ENCODE measurements at regions of chr12 and their contacts with region 1.

Region 1: GRCh38 chr12:15208125-15208524 is 13.1 kb downstream of the RERG start:
- DNase-seq: no peak
- H3K4me3 ChIP-seq: no peak overlapping the region
- H3K27ac ChIP-seq: peak overlapping the region; percentile 86 to 87
- H3K4me1 ChIP-seq: peaks cover 14 to 66% of the 10 kb centered on the region in 2 donors
- H3K27me3 ChIP-seq: no peaks in the 10 kb centered on the region
- CTCF ChIP-seq: peak in 2 of 3 experiments; percentile 34 to 39

Region 2: GRCh38 chr12:14774906-14775762 is 433.0 kb before region 1 on chr12:
- intact Hi-C with region 1: loop called (anchors 5 kb)
- DNase-seq: peak in 1 of 2 donors; percentile 84
- H3K4me3 ChIP-seq: peak overlapping the region; percentile 78 to 87
- H3K27ac ChIP-seq: peak overlapping the region; percentile 99
- H3K4me1 ChIP-seq: peaks cover 0 to 15% of the 10 kb centered on the region in 2 donors
- H3K27me3 ChIP-seq: no peaks in the 10 kb centered on the region
- CTCF ChIP-seq: no peak

Region 3: DNA sequence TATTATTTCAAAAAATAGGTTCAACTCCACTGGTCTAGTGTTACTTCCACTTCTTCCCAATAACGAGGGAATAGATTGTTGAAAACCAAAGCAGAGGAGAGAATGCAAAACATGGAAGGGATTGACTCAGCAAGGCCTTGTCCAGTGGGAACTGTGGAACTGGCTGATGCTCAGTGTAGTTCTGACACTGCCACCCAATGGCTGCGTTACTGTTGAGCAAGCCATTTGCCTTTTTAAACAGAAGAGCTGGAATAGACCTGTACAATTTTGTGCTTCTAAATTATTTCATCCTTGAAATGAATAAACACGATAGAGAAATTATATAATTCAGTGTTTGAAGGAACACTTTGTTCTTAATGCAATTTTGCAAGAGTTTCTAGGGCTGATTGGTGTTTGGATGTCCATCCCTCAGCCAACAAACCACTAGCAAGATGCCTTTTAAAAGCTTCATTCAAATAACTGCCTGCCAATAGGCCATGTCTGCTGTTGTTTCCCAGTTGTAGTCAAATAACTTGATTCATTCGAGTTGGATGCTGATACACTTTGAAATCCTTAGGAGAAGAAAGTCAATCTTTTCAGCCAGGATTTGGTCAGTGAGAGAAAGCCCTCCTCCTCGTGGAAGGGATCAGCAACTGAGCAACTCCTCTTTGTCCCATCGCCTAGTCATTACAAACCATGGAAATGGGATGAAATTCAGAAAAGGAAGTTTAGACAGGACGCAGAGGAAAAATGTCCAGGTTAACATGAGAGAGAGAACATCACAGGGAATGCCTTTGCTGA is 315.2 kb before region 1 on chr12:
- intact Hi-C with region 1: loop called (anchors 5 kb)
- DNase-seq: peak; percentile 25 to 86
- H3K4me3 ChIP-seq: peak overlapping the region in 1 of 2 donors; percentile 33
- H3K27ac ChIP-seq: peak overlapping the region; percentile 85 to 88
- H3K4me1 ChIP-seq: peaks cover 7 to 28% of the 10 kb centered on the region in 2 donors
- H3K27me3 ChIP-seq: no peaks in the 10 kb centered on the region
- CTCF ChIP-seq: peak in 2 of 3 experiments; percentile 18 to 20

Region 4: GRCh38 chr12:14948672-14949071 is 259.5 kb before region 1 on chr12:
- intact Hi-C with region 1: loop called (anchors 5 kb)
- DNase-seq: peak in 1 of 2 donors; percentile 81
- H3K4me3 ChIP-seq: peak overlapping the region in 1 of 2 donors; percentile 50
- H3K27ac ChIP-seq: peak overlapping the region; percentile 91 to 96
- H3K4me1 ChIP-seq: peaks cover 9 to 56% of the 10 kb centered on the region in 2 donors
- H3K27me3 ChIP-seq: no peaks in the 10 kb centered on the region
- CTCF ChIP-seq: no peak

Region 5: GRCh38 chr12:15151161-15152120 is 56.7 kb before region 1 on chr12:
- intact Hi-C with region 1: no loop called
- DNase-seq: no peak
- H3K4me3 ChIP-seq: peak overlapping the region in 1 of 2 donors; percentile 42
- H3K27ac ChIP-seq: peak overlapping the region; percentile 74 to 81
- H3K4me1 ChIP-seq: peaks cover 23 to 41% of the 10 kb centered on the region in 2 donors
- H3K27me3 ChIP-seq: no peaks in the 10 kb centered on the region
- CTCF ChIP-seq: peak; percentile 35 to 59 (median 48)